Endothelial cell of umbilical vein (primary cell): ENCODE measurements at regions of chr11 and their contacts with region 1.

Region 1: GRCh38 chr11:108906329-108906728 is 241.5 kb downstream of the DDX10 start:
- DNase-seq: peak; percentile 97
- H3K4me3 ChIP-seq: peak overlapping the region in 1 of 3 experiments; percentile 14
- H3K27ac ChIP-seq: peak overlapping the region; percentile 71
- H3K4me1 ChIP-seq: peaks cover 20% of the 10 kb centered on the region
- H3K27me3 ChIP-seq: no peaks in the 10 kb centered on the region
- CTCF ChIP-seq: no peak
- POLR2A ChIP-seq: peak; percentile 86

Region 2: GRCh38 chr11:108857382-108857781 is 48.9 kb before region 1 on chr11:
- CTCF ChIA-PET with region 1: no interaction called
- POLR2A ChIA-PET with region 1: no interaction called
- dilution Hi-C with region 1: no loop called
- intact Hi-C with region 1: no loop called
- DNase-seq: peak; percentile 95
- H3K4me3 ChIP-seq: no peak overlapping the region
- H3K27ac ChIP-seq: peak overlapping the region; percentile 87
- H3K4me1 ChIP-seq: peaks cover 32% of the 10 kb centered on the region
- H3K27me3 ChIP-seq: no peaks in the 10 kb centered on the region
- CTCF ChIP-seq: no peak
- POLR2A ChIP-seq: no peak

Region 3: GRCh38 chr11:108895579-108896480 is 10.5 kb before region 1 on chr11:
- CTCF ChIA-PET with region 1: no interaction called
- POLR2A ChIA-PET with region 1: no interaction called
- dilution Hi-C with region 1: no loop called
- intact Hi-C with region 1: loop called (anchors 1 kb)
- DNase-seq: peak; percentile 83
- H3K4me3 ChIP-seq: peak overlapping the region in 1 of 3 experiments; percentile 57
- H3K27ac ChIP-seq: peak overlapping the region; percentile 95
- H3K4me1 ChIP-seq: peaks cover 34% of the 10 kb centered on the region
- H3K27me3 ChIP-seq: no peaks in the 10 kb centered on the region
- CTCF ChIP-seq: no peak
- POLR2A ChIP-seq: no peak

Region 4: DNA sequence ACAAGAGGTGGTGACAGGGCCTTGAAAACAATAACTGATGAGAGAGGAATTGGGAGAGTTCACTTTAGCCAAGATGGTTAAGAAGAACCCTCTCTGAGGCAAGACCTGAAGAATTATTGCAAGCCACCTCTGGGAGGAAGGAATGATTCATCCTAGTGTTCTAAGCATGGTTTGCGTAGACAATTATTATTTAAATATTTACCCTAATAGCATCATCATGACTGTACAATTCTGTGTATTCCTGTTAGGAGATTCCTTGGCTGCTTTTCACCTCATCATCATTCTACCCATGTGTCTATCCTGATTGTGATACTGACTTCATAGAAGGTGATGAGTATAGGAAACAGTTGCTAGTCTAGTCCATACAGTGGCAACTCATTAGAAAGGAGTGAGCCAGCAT is 22.9 kb after region 1 on chr11:
- CTCF ChIA-PET with region 1: no interaction called
- POLR2A ChIA-PET with region 1: no interaction called
- dilution Hi-C with region 1: no loop called
- intact Hi-C with region 1: loop called (anchors 1 kb)
- DNase-seq: peak; percentile 82
- H3K4me3 ChIP-seq: no peak overlapping the region
- H3K27ac ChIP-seq: peak overlapping the region; percentile 85
- H3K4me1 ChIP-seq: peaks cover 24% of the 10 kb centered on the region
- H3K27me3 ChIP-seq: no peaks in the 10 kb centered on the region
- CTCF ChIP-seq: no peak
- POLR2A ChIP-seq: no peak

Region 5: DNA sequence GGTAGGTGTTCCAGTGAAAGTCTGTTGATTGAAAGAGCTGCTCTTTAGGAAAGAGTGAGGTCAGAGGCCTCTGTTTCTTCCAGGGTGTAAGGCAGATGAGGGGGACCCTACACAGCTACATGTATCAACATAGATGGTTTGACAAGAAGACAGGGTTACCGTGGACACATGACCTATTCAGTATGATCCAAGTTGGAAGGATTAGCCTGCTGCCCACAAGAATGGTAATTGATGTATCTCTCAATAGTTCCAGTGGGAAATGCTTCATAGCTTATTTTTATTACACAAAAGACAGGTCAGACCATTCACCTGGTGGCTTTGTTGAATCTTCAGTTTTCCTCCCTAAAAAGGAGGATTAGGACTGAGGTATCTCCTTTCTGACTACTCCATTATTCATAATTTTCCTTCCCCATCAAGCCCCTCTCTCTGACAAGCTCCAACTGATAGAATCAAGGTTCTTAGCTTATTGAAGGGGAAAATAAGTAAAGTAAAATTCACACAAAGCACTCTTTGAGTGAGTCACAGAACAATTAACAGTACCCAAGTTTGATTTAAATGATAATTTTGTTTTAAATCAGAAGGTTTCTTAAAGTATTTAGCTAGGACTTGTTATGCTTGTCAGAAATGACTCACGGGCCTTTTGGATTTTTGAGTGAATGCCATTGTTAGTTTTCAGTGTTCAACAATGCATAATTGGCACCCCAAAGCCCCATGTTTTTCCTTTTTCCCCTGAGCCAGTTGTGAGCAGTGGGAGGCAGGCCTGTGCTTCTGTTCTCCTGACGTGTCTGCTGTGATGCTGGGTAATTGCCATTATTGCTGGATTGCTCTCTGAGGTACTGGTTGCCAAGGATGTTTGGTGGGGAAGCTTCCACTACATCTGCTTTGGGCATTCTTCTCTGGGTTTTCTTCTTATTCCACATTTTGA is 131.8 kb after region 1 on chr11:
- CTCF ChIA-PET with region 1: no interaction called
- POLR2A ChIA-PET with region 1: no interaction called
- dilution Hi-C with region 1: no loop called
- intact Hi-C with region 1: loop called (anchors 1 kb)
- DNase-seq: peak; percentile 85
- H3K4me3 ChIP-seq: no peak overlapping the region
- H3K27ac ChIP-seq: peak overlapping the region; percentile 21
- H3K4me1 ChIP-seq: peaks cover 44% of the 10 kb centered on the region
- H3K27me3 ChIP-seq: no peaks in the 10 kb centered on the region
- CTCF ChIP-seq: no peak
- POLR2A ChIP-seq: no peak